ENCODE measurements at regions of chr1 and their contacts with region 1.

Region 1: DNA sequence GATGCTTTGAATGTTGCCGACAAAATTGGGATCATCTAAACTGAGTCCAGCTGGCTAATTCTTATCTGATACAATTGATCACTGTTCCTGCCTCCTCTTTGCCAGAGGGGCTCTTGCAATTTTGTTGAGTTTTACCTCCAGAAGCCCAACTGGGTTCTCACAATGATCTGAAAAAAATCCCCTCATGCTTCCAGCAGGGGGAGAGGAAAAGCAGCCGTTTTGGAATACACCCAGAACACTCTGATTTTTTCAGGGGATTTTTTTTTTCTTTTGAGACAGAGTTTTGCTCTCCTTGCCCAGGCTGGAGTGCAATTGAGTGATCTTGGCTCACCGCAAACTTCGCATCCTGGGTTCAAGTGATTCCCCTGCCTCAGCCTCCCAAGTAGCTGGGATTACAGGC is 13.9 kb upstream of the RERE start:
- DNase-seq: no peak
- H3K4me3 ChIP-seq: no peak overlapping the region
- H3K27ac ChIP-seq: no peak overlapping the region
- H3K4me1 ChIP-seq: no peaks in the 10 kb centered on the region
- H3K27me3 ChIP-seq: no peaks in the 10 kb centered on the region
- CTCF ChIP-seq: peak in 2 of 3 experiments; percentile 41 to 47; a peak in 2 of 4 replicates
- EP300 ChIP-seq: no peak
- POLR2A ChIP-seq: no peak
- RAD21 ChIP-seq: peak; percentile 14 to 44; a peak in 3 of 4 replicates

Region 2: GRCh38 chr1:8698012-8698630 is 133.2 kb before region 1 on chr1:
- CTCF ChIA-PET with region 1: no interaction called
- POLR2A ChIA-PET with region 1: no interaction called
- DNase-seq: no peak
- H3K4me3 ChIP-seq: no peak overlapping the region
- H3K27ac ChIP-seq: no peak overlapping the region
- H3K4me1 ChIP-seq: peaks cover 2 to 27% (median 10%) of the 10 kb centered on the region in 4 experiments; a peak in 6 of 7 replicates
- H3K27me3 ChIP-seq: no peaks in the 10 kb centered on the region
- CTCF ChIP-seq: no peak
- EP300 ChIP-seq: no peak
- POLR2A ChIP-seq: no peak
- RAD21 ChIP-seq: no peak

Region 3: GRCh38 chr1:8800416-8800815 is 30.9 kb before region 1 on chr1:
- CTCF ChIA-PET with region 1: no interaction called
- POLR2A ChIA-PET with region 1: no interaction called
- DNase-seq: peak in 1 of 2 experiments; percentile 38
- H3K4me3 ChIP-seq: no peak overlapping the region
- H3K27ac ChIP-seq: no peak overlapping the region
- H3K4me1 ChIP-seq: no peaks in the 10 kb centered on the region
- H3K27me3 ChIP-seq: no peaks in the 10 kb centered on the region
- CTCF ChIP-seq: no peak
- EP300 ChIP-seq: no peak
- POLR2A ChIP-seq: no peak
- RAD21 ChIP-seq: no peak

Region 4: GRCh38 chr1:8817406-8818324 is 13.7 kb before region 1 on chr1 and contains the start of gene RERE:
- CTCF ChIA-PET with region 1: interaction called, 14 read pairs
- POLR2A ChIA-PET with region 1: interaction called, 4 read pairs
- DNase-seq: peak; percentile 57 to 99
- H3K4me3 ChIP-seq: peak within 1 kb of the TSS; percentile 89 to 95 (median 92)
- H3K27ac ChIP-seq: peak within 1 kb of the TSS; percentile 89
- H3K4me1 ChIP-seq: peaks cover 3 to 10% (median 5%) of the 10 kb centered on the region in 4 experiments; a peak in 6 of 7 replicates
- H3K27me3 ChIP-seq: no peaks in the 10 kb centered on the region
- CTCF ChIP-seq: no peak
- EP300 ChIP-seq: no peak
- POLR2A ChIP-seq: peak; percentile 70 to 91
- RAD21 ChIP-seq: no peak
- total RNA-seq, gene RERE: 126 and 142 TPM in 2 replicates

Region 5: GRCh38 chr1:9028921-9029705 is 197.8 kb after region 1 on chr1:
- CTCF ChIA-PET with region 1: no interaction called
- POLR2A ChIA-PET with region 1: no interaction called
- DNase-seq: no peak
- H3K4me3 ChIP-seq: no peak overlapping the region
- H3K27ac ChIP-seq: no peak overlapping the region
- H3K4me1 ChIP-seq: peaks cover 0 to 2% (median 0%) of the 10 kb centered on the region in 4 experiments; a peak in 2 of 7 replicates
- H3K27me3 ChIP-seq: no peaks in the 10 kb centered on the region
- CTCF ChIP-seq: no peak
- EP300 ChIP-seq: no peak
- POLR2A ChIP-seq: no peak
- RAD21 ChIP-seq: no peak

Measured in H1 (cell line).